ENCODE measurements at regions of chr19 and their contacts with region 1.

Region 1: DNA sequence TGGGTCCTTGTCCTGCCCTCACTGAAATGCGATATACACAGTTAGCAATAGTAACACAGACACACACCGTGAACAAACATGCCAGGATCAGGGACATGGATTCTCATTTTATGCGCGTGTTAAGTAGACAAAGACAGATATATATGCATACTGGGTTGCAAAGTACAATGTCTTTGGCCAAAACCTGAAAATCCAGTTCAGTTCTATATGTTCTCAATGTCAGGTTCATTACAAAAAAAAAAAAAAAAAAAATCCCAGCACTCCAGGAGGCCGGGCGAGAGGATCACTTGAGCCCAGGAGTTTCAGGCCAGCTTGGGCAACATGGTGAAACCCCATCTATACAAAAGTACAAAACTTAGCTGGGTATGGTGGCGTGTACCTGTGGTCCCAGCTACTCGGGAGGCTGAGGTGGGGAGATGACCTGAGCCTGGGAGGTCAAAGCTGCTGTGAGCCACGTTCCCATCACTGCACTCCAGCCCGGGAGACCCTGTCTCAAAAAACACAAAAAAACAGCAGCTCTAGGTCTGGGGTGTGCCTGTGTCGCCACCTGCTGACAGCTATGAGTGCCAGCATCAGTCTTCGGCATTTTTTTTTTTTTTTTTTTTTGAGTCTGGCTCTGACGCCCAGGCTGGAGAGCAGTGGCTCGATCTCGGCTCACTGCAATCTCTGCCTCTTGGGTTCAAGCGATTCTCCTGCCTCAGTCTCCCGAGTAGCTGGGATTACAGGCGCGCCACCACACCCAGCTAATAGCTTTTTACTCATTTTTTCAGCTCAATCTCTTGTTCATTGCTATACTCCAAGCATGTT is 10.3 kb downstream of the AP2S1 start:
- DNase-seq: peak; percentile 60
- ATAC-seq: peak; percentile 67

Region 2: GRCh38 chr19:46753420-46754155 is 86.8 kb before region 1 on chr19:
- intact Hi-C with region 1: loop called (anchors 1 kb)
- DNase-seq: peak; percentile 64
- ATAC-seq: peak; percentile 16

Region 3: GRCh38 chr19:46776927-46777911 is 63.1 kb before region 1 on chr19:
- intact Hi-C with region 1: loop called (anchors 5 kb)
- DNase-seq: no peak
- ATAC-seq: no peak